ENCODE measurements at regions of chr17 and their contacts with region 1.

Region 1: GRCh38 chr17:43576563-43577229 is 30.6 kb upstream of the ETV4 start:
- DNase-seq: peak; percentile 81
- ATAC-seq: peak; percentile 80
- H3K4me3 Mint-ChIP-seq: no peak overlapping the region
- H3K27ac Mint-ChIP-seq: no peak overlapping the region
- H3K4me1 Mint-ChIP-seq: peaks cover 13% of the 10 kb centered on the region
- H3K27me3 Mint-ChIP-seq: peaks cover 5% of the 10 kb centered on the region

Region 2: GRCh38 chr17:43552229-43552837 is 24.4 kb before region 1 on chr17:
- CTCF ChIA-PET with region 1: interaction called, 19 read pairs
- POLR2A ChIA-PET with region 1: no interaction called
- intact Hi-C with region 1: no loop called
- DNase-seq: no peak
- ATAC-seq: no peak
- H3K4me3 Mint-ChIP-seq: no peak overlapping the region
- H3K27ac Mint-ChIP-seq: no peak overlapping the region
- H3K4me1 Mint-ChIP-seq: peaks cover 7% of the 10 kb centered on the region
- H3K27me3 Mint-ChIP-seq: peaks cover 33% of the 10 kb centered on the region

Region 3: GRCh38 chr17:43667947-43668348 is 91.3 kb after region 1 on chr17:
- CTCF ChIA-PET with region 1: interaction called, 26 read pairs
- POLR2A ChIA-PET with region 1: no interaction called
- intact Hi-C with region 1: loop called (anchors 1 kb)
- DNase-seq: no peak
- ATAC-seq: peak; percentile 98
- H3K4me3 Mint-ChIP-seq: no peak overlapping the region
- H3K27ac Mint-ChIP-seq: no peak overlapping the region
- H3K4me1 Mint-ChIP-seq: peaks cover 7% of the 10 kb centered on the region
- H3K27me3 Mint-ChIP-seq: peaks cover 3% of the 10 kb centered on the region

Region 4: DNA sequence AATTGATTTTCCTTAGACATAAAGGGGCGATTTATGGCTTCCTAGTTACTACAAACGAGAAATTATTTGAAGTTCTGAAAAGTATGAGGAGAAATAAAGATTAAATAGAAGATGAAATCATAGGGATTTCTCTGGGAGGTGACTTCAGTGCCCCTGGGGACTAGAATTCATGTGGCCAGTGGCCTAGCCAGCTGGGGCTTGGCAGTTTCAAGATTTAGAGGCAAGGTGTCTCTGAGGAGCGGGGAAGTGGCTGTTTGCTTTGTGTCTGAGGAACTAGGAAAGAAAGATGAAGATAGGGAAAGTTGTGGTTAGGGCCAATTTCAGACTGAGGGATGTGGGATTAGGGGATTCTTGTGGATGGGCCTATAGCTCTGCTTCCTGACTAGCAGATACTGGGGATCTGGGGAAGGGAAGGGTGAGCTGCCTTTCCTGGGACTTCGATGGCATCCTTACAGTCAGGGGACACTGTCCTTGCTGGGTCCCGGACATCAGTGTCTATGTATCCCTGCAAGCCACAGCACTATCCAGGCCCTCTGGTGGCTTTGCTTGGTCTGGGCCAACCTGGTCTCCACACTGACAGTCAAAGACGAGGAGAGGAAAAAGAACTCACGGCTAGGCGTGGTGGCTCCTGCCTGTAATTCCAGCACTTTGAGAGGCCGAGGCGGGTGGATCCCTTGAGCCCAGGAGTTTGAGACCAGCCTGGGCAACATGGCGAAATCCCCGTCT is 107.4 kb after region 1 on chr17:
- CTCF ChIA-PET with region 1: interaction called, 10 read pairs
- POLR2A ChIA-PET with region 1: no interaction called
- intact Hi-C with region 1: no loop called
- DNase-seq: no peak
- ATAC-seq: no peak
- H3K4me3 Mint-ChIP-seq: no peak overlapping the region
- H3K27ac Mint-ChIP-seq: no peak overlapping the region
- H3K4me1 Mint-ChIP-seq: no peaks in the 10 kb centered on the region
- H3K27me3 Mint-ChIP-seq: peaks cover 4% of the 10 kb centered on the region

Region 5: DNA sequence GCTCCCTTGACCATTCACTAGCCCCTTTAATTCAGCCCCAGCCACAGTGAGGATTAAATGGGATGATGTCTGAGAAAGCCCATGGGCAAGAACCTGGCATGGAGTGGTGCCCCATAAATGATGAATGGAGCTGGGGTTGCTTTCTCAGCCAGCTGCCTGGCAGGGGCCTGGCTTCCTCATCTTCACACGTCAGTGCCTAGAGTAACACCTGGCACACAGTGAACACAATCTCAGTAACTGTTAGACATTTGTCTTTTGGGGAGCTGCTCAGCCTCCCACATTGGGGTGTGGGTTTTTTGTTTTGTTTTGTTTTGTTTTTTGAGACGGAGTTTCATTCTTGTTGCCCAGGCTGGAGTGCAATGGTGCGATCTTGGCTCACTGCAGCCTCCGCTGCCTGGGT is 132.5 kb after region 1 on chr17:
- CTCF ChIA-PET with region 1: no interaction called
- POLR2A ChIA-PET with region 1: no interaction called
- intact Hi-C with region 1: no loop called
- DNase-seq: no peak
- ATAC-seq: no peak
- H3K4me3 Mint-ChIP-seq: no peak overlapping the region
- H3K27ac Mint-ChIP-seq: no peak overlapping the region
- H3K4me1 Mint-ChIP-seq: peaks cover 8% of the 10 kb centered on the region
- H3K27me3 Mint-ChIP-seq: peaks cover 28% of the 10 kb centered on the region

Region 6: GRCh38 chr17:43760254-43760852 is 183.7 kb after region 1 on chr17:
- CTCF ChIA-PET with region 1: interaction called, 24 read pairs
- POLR2A ChIA-PET with region 1: no interaction called
- intact Hi-C with region 1: loop called (anchors 1 to 5 kb)
- DNase-seq: peak; percentile 96
- ATAC-seq: peak; percentile 97
- H3K4me3 Mint-ChIP-seq: no peak overlapping the region
- H3K27ac Mint-ChIP-seq: no peak overlapping the region
- H3K4me1 Mint-ChIP-seq: no peaks in the 10 kb centered on the region
- H3K27me3 Mint-ChIP-seq: peaks cover 19% of the 10 kb centered on the region

Measured in activated CD4-positive, alpha-beta T cell treated with anti-CD3 and anti-CD28 coated beads for 36 hours (primary cell).